Ascending aorta (tissue), 2 donors: ENCODE measurements at regions of chr11 and their contacts with region 1.

Region 1: GRCh38 chr11:22151649-22152197 is 41.2 kb upstream of the ANO5 start:
- DNase-seq: no peak
- H3K4me3 ChIP-seq: no peak overlapping the region
- H3K27ac ChIP-seq: no peak overlapping the region
- H3K4me1 ChIP-seq: no peaks in the 10 kb centered on the region
- H3K27me3 ChIP-seq: no peaks in the 10 kb centered on the region
- CTCF ChIP-seq: no peak

Region 2: GRCh38 chr11:21798216-21798615 is 353.5 kb before region 1 on chr11:
- intact Hi-C with region 1: loop called (anchors 5 kb)
- DNase-seq: no peak
- H3K4me3 ChIP-seq: no peak overlapping the region
- H3K27ac ChIP-seq: no peak overlapping the region
- H3K4me1 ChIP-seq: no peaks in the 10 kb centered on the region
- H3K27me3 ChIP-seq: no peaks in the 10 kb centered on the region
- CTCF ChIP-seq: no peak